ENCODE measurements at regions of chr3 and their contacts with region 1.

Region 1: GRCh38 chr3:73502609-73503583 is 121.8 kb downstream of the PDZRN3 start:
- DNase-seq: peak; percentile 98
- ATAC-seq: peak; percentile 84
- H3K4me3 ChIP-seq: peak overlapping the region; percentile 1; the same call in 1 of the 2 replicates
- H3K27ac ChIP-seq: peak overlapping the region; percentile 70; the same call in 1 of the 2 replicates
- H3K4me1 ChIP-seq: peaks cover 10% of the 10 kb centered on the region; the same call in 1 of the 2 replicates
- H3K27me3 ChIP-seq: no peaks in the 10 kb centered on the region
- CTCF ChIP-seq: peak; percentile 94
- POLR2A ChIP-seq: no peak
- RAD21 ChIP-seq: peak; percentile 96

Region 2: GRCh38 chr3:73100741-73101559 is 401.9 kb before region 1 on chr3:
- CTCF ChIA-PET with region 1: interaction called, 3 read pairs
- POLR2A ChIA-PET with region 1: no interaction called
- dilution Hi-C with region 1: no loop called
- in situ Hi-C with region 1: loop called (anchors 5 kb)
- intact Hi-C with region 1: loop called (anchors 1 kb)
- DNase-seq: peak; percentile 75
- ATAC-seq: peak; percentile 99
- H3K4me3 ChIP-seq: no peak overlapping the region
- H3K27ac ChIP-seq: no peak overlapping the region
- H3K4me1 ChIP-seq: no peaks in the 10 kb centered on the region
- H3K27me3 ChIP-seq: peaks cover 9% of the 10 kb centered on the region
- CTCF ChIP-seq: peak; percentile 87
- POLR2A ChIP-seq: no peak
- RAD21 ChIP-seq: peak; percentile 90

Region 3: GRCh38 chr3:73451306-73451944 is 51.5 kb before region 1 on chr3:
- CTCF ChIA-PET with region 1: interaction called, 3 read pairs
- POLR2A ChIA-PET with region 1: no interaction called
- dilution Hi-C with region 1: no loop called
- in situ Hi-C with region 1: no loop called
- intact Hi-C with region 1: loop called (anchors 1 kb)
- DNase-seq: peak; percentile 70
- ATAC-seq: peak; percentile 62
- H3K4me3 ChIP-seq: no peak overlapping the region
- H3K27ac ChIP-seq: no peak overlapping the region
- H3K4me1 ChIP-seq: peaks cover 11% of the 10 kb centered on the region
- H3K27me3 ChIP-seq: no peaks in the 10 kb centered on the region
- CTCF ChIP-seq: no peak
- POLR2A ChIP-seq: no peak
- RAD21 ChIP-seq: no peak

Region 4: GRCh38 chr3:73461547-73461946 is 41.3 kb before region 1 on chr3:
- CTCF ChIA-PET with region 1: interaction called, 3 read pairs
- POLR2A ChIA-PET with region 1: no interaction called
- dilution Hi-C with region 1: no loop called
- in situ Hi-C with region 1: loop called (anchors 5 kb)
- intact Hi-C with region 1: no loop called
- DNase-seq: peak; percentile 72
- ATAC-seq: peak; percentile 63
- H3K4me3 ChIP-seq: no peak overlapping the region
- H3K27ac ChIP-seq: peak overlapping the region; percentile 31; the same call in 1 of the 2 replicates
- H3K4me1 ChIP-seq: peaks cover 8% of the 10 kb centered on the region
- H3K27me3 ChIP-seq: no peaks in the 10 kb centered on the region
- CTCF ChIP-seq: no peak
- POLR2A ChIP-seq: no peak
- RAD21 ChIP-seq: no peak

Region 5: DNA sequence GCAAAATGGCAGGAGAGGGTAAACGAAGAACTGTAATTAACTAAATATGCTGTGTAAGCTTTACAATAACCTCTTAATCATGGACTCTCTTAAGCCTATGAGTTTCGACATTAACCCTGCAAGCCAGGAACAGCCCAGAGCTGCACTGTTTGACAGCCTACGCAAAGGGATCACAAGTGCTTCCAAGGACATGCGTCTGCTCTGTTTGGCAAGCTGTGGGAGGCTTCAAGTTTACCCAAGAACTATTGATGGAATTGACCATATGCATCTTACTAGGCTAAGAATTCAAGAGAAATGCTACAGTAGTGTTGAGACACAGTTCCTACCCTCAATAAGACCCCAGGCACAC is 55.8 kb after region 1 on chr3:
- CTCF ChIA-PET with region 1: no interaction called
- POLR2A ChIA-PET with region 1: no interaction called
- dilution Hi-C with region 1: no loop called
- in situ Hi-C with region 1: no loop called
- intact Hi-C with region 1: no loop called
- DNase-seq: peak; percentile 52
- ATAC-seq: peak; percentile 36
- H3K4me3 ChIP-seq: no peak overlapping the region
- H3K27ac ChIP-seq: peak overlapping the region; percentile 72; the same call in 1 of the 2 replicates
- H3K4me1 ChIP-seq: peaks cover 26% of the 10 kb centered on the region
- H3K27me3 ChIP-seq: no peaks in the 10 kb centered on the region
- CTCF ChIP-seq: no peak
- POLR2A ChIP-seq: no peak
- RAD21 ChIP-seq: no peak

Region 6: GRCh38 chr3:73633916-73634344 is 131.0 kb after region 1 on chr3:
- CTCF ChIA-PET with region 1: no interaction called
- POLR2A ChIA-PET with region 1: no interaction called
- dilution Hi-C with region 1: no loop called
- in situ Hi-C with region 1: no loop called
- intact Hi-C with region 1: no loop called
- DNase-seq: peak; percentile 18
- ATAC-seq: no peak
- H3K4me3 ChIP-seq: no peak overlapping the region
- H3K27ac ChIP-seq: no peak overlapping the region
- H3K4me1 ChIP-seq: peaks cover 16% of the 10 kb centered on the region
- H3K27me3 ChIP-seq: no peaks in the 10 kb centered on the region
- CTCF ChIP-seq: no peak
- POLR2A ChIP-seq: no peak
- RAD21 ChIP-seq: no peak

Measured in IMR-90 (cell line).